KBM-7 (cell line): ENCODE measurements at regions of chr17 and their contacts with region 1.

Region 1: DNA sequence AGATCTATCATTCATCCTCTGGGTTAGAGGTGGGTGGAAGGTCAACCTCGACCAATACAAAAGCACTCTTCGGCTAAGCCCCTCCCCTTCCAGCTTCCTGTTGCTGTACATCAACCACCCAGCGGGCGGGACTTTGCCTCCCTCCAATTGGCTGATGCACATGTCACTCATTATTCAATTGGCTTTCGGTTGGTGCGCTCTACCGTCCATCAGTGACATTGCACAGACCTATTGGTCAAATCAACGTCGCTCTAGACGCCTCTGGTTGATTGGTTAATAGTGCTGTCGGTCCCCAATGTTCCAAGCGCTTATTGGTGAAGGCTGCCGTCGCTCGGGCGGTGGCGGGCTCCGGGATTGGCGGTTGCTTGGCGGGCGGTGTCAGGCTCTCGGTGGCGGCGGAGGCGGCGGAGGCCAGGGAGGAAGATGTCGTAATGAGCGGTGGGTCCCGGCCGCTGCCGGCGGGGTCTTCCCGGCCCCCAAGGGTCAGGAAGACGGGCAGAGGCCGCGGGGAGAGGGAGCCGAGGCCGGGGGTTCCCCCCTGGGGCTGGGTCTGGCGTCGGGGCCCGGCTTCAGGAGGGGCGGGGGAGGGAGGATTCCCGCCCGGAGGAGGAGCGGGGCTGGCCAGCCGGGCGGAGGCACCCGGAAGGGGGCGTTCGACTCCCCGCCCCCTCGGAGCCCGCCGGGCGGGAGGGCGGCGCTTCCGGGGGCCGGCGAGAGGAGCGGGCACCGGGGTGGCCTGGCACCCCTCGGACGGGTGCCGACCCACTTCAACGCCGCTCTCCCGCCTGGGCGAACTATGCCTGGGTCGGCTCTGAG is at the start of gene SP2:
- DNase-seq: peak; percentile 100

Region 2: DNA sequence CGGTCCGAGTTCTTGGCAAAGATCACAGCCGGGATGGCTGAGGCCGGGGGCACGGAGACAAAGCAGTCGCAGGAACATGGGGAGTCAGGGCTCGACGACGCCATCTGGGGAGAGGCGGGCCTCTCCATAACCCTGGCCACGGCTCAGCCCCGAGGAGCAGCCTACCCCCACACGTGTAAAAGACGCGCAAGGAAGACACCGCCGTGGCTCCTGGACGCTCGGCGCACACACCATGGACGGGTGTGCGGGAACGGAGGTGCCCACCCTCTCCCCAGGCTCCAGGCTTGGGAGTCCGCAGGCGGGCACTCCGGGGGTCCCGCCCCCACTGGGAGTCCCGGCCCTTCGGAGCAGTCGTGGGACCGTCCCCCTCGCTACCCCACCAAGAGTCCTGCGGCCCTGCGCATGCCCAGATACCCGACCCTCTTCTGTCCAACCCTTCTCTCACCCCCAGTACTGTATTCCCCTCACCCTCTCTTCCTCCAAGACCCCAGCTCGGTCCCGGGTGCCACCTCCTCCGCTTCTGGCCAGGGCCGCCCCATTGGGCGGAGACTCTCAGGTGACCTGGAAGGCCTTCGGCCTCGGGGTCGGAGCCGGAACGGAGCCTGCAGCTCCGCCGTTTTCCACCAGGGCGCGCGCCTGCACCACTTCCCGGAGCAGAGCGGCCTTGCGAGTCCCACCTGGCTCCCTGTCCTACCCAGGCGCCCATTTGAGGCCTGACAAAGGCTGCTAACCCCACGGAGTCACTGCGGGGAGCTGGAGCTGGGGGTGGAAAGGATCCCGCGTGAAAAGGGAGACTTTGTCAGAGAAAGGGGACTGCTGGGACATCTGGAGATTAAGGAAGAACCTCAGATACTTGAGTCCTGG is 55.1 kb before region 1 on chr17 and contains the start of gene SCRN2:
- in situ Hi-C with region 1: loop called (anchors 10 kb)
- DNase-seq: peak; percentile 96

Region 3: GRCh38 chr17:47941236-47941994 is 45.4 kb after region 1 on chr17 and contains the start of gene PNPO:
- in situ Hi-C with region 1: loop called (anchors 10 kb)
- DNase-seq: peak; percentile 98